HEK293T (cell line): ENCODE measurements at regions of chr1 and their contacts with region 1.

Region 1: DNA sequence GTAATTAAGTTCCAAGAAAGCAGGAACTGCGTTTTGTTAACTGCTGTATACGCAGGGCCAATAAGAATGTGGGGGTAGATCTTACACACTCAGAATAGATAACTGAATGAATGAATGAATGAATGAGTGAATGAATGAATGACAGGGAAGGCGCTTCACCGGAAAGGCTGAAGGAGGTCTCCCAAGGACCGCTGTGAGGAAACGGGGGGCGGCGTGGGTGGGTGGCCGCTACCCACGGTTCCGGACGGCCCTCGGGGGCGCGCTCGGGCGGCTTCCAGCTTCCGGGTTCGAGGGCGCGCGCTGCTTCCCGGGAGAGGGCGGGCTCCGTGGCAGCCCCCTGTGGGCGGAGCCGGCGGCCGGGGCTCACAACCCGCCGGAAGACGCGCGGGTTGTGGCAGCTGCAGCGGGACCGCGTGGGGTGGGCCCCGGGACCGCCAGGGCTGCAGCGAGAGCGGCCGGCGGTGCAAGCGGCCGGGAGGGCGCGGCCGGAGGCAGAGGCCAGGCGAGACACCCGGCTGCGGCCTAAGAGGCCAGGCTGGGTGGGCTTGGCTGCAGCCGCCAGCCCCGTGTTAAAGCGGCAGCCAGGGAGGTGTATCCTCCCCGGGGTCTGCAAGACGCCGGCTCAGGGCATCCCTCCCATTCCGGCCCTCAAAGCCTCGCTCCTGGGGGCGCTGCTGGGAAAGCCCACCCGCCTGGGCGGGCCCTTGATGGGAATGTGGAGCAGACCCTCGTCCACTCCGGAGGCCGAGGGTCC is at the start of gene ZFP69:
- DNase-seq: peak; percentile 89

Region 2: GRCh38 chr1:40449684-40450494 is 27.2 kb before region 1 on chr1 and contains the start of gene ZFP69B:
- CTCF ChIA-PET with region 1: no interaction called
- POLR2A ChIA-PET with region 1: interaction called, 30 read pairs
- DNase-seq: peak; percentile 96

Region 3: GRCh38 chr1:40508375-40509341 is 31.6 kb after region 1 on chr1 and contains the start of gene EXO5:
- CTCF ChIA-PET with region 1: no interaction called
- POLR2A ChIA-PET with region 1: interaction called, 10 read pairs
- DNase-seq: peak; percentile 51

Region 4: DNA sequence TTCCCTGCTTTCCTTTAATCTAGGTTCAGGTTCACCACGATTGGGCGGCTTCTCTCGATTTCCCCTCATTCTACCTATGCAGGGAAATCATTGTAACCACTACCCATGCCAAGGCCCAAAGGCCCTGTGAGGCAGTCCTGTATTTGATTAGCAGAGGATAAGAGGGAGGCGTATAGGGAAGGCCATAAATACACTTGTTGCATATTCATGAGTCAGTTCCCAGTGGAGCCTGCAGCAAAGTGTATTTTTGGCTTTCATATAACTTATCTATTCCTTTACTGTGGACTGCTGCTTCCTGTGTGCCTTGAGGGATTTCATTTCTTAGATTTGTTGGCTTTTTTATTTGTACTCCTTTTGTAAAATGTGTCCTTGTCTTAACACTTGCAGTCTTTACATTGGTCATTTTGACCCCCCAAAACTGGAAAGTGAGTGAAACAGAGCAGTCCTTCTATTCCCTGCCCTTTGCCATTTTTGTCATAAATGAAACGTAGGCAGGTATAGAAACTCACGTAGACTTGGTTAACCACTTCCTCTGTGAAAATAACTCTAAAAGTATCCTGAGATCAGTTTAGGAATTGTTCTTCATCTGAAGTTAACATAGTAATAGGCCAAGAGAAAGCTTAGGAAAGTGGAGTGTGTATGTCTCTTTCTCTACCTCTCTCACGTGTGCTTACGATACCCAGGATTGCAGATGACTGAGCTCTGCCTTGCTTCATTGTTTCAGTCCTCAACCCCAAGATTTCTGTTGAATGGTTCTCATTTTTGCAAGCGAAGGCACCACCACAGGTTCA is 286.8 kb after region 1 on chr1:
- CTCF ChIA-PET with region 1: no interaction called
- POLR2A ChIA-PET with region 1: no interaction called
- DNase-seq: no peak